Activated naive CD4-positive, alpha-beta T cell treated with anti-CD3 and anti-CD28 coated beads for 36 hours (primary cell): ENCODE measurements at regions of chr12 and their contacts with region 1.

Region 1: DNA sequence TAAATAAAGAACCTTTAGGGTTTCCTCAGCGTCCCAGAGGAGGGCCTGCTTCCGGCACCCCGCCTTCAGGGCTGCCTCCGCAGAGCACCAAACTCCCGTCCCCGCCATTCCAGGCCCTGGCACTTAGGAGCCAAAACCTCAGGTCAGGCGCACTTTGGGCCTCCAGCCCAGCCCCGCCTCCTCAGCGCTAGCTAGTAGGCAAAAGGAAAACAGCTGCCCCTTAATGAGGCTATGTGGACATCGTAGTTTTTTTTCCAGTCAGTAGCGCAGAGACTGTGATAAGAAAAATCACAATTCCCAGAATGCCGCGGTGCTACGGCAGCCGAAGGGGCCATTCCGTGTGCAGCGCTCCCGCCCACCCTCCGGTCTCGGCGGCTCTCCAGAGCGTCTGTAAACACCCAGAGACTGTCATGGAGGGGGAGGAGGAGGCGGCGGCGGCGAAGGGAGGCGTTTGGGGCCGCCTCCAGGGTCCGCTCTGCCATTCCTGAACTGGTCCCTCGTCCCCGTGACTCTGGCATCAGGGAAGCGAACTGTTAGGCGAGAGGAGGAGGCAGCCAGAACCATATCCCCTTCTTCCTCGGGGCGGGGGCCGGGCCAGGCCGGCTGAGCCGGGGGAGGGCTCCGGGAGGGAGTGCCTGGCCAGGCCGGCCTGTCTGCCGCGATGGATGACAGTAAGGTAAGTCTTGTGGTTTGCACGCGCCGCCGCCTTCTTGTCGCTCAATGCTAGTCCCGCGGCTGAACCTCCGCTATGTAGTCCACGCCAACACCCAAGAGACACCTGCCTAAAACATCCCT is at the start of gene CREBL2:
- DNase-seq: peak; percentile 90
- H3K4me3 Mint-ChIP-seq: peak within 1 kb of the TSS; percentile 88
- H3K27ac Mint-ChIP-seq: peak within 1 kb of the TSS; percentile 99
- H3K4me1 Mint-ChIP-seq: peaks cover 59% of the 10 kb centered on the region
- H3K27me3 Mint-ChIP-seq: no peaks in the 10 kb centered on the region
- total RNA-seq, gene CREBL2: 15.6 to 16.1 TPM

Region 2: GRCh38 chr12:12376646-12377448 is 234.9 kb before region 1 on chr12:
- CTCF ChIA-PET with region 1: interaction called, 10 read pairs
- intact Hi-C with region 1: loop called (anchors 1 kb)
- DNase-seq: peak; percentile 33
- H3K4me3 Mint-ChIP-seq: no peak overlapping the region
- H3K27ac Mint-ChIP-seq: peak overlapping the region; percentile 30
- H3K4me1 Mint-ChIP-seq: peaks cover 37% of the 10 kb centered on the region
- H3K27me3 Mint-ChIP-seq: no peaks in the 10 kb centered on the region

Region 3: GRCh38 chr12:12582895-12583303 is 28.8 kb before region 1 on chr12:
- CTCF ChIA-PET with region 1: no interaction called
- intact Hi-C with region 1: loop called (anchors 1 kb)
- DNase-seq: peak; percentile 81
- H3K4me3 Mint-ChIP-seq: peak overlapping the region; percentile 26
- H3K27ac Mint-ChIP-seq: peak overlapping the region; percentile 89
- H3K4me1 Mint-ChIP-seq: peaks cover 44% of the 10 kb centered on the region
- H3K27me3 Mint-ChIP-seq: peaks cover under 1% of the 10 kb centered on the region

Region 4: GRCh38 chr12:12661086-12661485 is 49.4 kb after region 1 on chr12:
- CTCF ChIA-PET with region 1: interaction called, 5 read pairs
- intact Hi-C with region 1: loop called (anchors 1 kb)
- DNase-seq: no peak
- H3K4me3 Mint-ChIP-seq: no peak overlapping the region
- H3K27ac Mint-ChIP-seq: no peak overlapping the region
- H3K4me1 Mint-ChIP-seq: peaks cover under 1% of the 10 kb centered on the region
- H3K27me3 Mint-ChIP-seq: no peaks in the 10 kb centered on the region

Region 5: GRCh38 chr12:12716793-12717585 is 105.3 kb after region 1 on chr12 and contains the start of gene CDKN1B:
- CTCF ChIA-PET with region 1: no interaction called
- intact Hi-C with region 1: loop called (anchors 1 kb)
- DNase-seq: peak; percentile 90
- H3K4me3 Mint-ChIP-seq: peak within 1 kb of the TSS; percentile 98
- H3K27ac Mint-ChIP-seq: peak within 1 kb of the TSS; percentile 98
- H3K4me1 Mint-ChIP-seq: peaks cover 55% of the 10 kb centered on the region
- H3K27me3 Mint-ChIP-seq: no peaks in the 10 kb centered on the region
- total RNA-seq, gene CDKN1B: 35.9 to 39.1 TPM